Esophagus squamous epithelium (tissue), 5 donors: ENCODE measurements at regions of chr11 and their contacts with region 1.

Region 1: DNA sequence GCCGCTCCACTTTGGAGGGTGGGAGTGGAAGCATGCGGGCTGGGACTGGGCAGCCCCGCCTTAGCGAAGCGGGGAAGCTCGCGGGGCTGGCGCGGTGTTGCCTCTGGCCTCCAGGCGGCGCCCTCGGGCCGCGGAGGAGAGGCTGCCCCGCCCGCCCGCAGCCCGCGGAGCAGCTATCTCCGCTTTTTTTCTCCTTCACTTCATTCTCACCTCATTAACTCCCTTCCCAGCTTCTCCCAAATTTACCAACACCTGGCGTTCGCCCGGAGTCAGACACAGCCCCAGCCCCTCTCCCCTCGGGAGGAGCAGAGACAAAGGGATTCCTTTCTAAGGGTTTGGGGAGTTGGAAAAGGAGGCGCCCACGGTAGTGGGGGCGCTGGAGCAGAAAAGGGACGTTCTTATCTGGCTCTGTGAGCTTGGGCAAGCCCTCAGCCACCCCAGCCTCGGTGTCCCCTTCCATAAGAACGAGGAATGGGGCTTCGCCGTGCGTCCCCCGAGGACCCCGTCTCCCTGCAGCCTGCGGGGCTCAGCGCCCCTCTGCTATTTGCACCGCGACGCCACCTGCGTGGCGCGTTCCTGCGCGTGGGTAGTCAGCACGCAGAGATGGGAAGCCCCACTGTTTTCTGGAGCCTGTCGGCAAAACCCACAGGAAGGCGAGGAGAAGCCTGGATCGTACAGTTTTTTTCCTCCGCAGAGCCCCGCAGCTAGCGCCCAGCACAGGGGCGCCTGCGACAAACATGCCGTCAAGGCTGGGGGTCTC is 1.5 kb upstream of the WNT11 start:
- DNase-seq: no peak
- H3K4me3 ChIP-seq: peak overlapping the region; percentile 30 to 77 (median 57)
- H3K27ac ChIP-seq: no peak overlapping the region
- H3K4me1 ChIP-seq: peaks cover 41 to 63% (median 46%) of the 10 kb centered on the region in 3 donors
- H3K27me3 ChIP-seq: peaks cover 0 to 100% (median 17%) of the 10 kb centered on the region in 4 donors
- CTCF ChIP-seq: peak; percentile 92 to 98 (median 96)
- POLR2A ChIP-seq: no peak

Region 2: DNA sequence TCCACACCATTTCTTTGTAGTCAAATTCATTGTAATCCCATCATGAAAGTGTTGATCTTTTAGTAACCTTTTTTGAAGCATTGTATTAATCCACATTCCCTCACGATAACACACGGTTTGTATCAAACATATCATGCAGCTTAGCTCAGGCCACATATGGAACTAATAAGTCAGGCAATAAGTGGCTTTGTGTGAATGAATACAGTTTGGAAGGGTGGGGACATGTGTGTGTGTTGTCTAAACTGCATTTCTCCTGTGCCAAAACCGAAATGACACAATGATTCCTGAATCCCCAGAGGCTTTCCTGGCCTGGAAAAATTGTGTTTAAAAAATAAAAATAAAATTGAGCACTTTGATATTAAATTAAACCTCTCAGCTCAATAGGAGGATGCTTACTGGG is 99.9 kb before region 1 on chr11:
- intact Hi-C with region 1: no loop called
- DNase-seq: no peak
- H3K4me3 ChIP-seq: no peak overlapping the region
- H3K27ac ChIP-seq: no peak overlapping the region
- H3K4me1 ChIP-seq: peaks cover 0 to under 1% (median 0%) of the 10 kb centered on the region in 3 donors
- H3K27me3 ChIP-seq: no peaks in the 10 kb centered on the region
- CTCF ChIP-seq: no peak
- POLR2A ChIP-seq: no peak

Region 3: GRCh38 chr11:76318744-76319384 is 111.0 kb after region 1 on chr11:
- intact Hi-C with region 1: loop called (anchors 5 kb)
- DNase-seq: no peak
- H3K4me3 ChIP-seq: no peak overlapping the region
- H3K27ac ChIP-seq: no peak overlapping the region
- H3K4me1 ChIP-seq: peaks cover 0 to 9% (median 8%) of the 10 kb centered on the region in 3 donors
- H3K27me3 ChIP-seq: peaks cover 4 to 59% (median 6%) of the 10 kb centered on the region in 4 donors
- CTCF ChIP-seq: peak; percentile 83 to 96 (median 92)
- POLR2A ChIP-seq: no peak